B cell (primary cell): ENCODE measurements at regions of chr5 and their contacts with region 1.

Region 1: DNA sequence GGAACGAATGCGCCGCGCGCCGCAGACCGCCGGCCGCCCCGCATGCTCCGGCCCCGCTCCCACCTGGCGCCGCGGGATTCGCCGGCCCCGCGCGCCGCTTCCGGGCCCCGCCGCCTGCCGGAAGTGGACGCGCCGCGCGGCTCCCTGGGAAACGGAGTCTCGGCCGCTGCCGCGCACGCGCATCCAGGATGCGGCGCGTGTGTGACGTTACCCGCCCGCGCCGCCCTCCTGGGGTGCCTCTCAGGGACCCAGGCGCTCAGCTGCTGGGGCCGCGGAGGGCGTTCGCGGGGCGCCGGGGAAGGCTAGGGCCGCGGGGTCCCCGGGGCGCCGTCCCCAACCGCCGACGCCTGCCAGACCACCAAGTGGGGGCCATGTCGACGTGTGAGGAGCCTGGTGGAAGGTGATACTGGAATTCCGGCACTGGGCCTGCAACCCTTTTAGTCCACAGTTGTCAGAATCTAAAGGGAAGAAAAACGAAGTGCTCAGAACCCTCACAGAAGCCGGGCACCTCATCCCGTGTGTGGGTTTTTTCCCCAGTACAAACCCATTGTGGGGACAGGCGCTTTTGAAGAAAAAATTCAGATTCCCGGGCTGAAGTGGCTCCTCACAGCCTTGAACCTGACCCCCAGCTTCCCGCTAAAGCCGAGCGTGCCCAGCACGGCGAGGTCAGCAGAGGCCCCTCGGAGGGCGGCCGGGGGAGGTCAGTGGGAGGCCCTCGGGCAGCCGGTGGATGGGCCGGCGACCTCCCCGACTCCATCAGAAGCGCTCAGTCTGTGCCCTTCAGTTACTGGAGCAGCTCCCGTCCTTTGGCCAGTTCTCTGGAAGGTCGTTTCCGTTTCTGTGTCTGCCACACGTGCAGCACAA is at the start of gene CLPTM1L:
- DNase-seq: peak; percentile 94
- ATAC-seq: peak; percentile 95
- H3K4me3 ChIP-seq: peak within 1 kb of the TSS; percentile 56 to 92 (median 81)
- H3K4me3 Mint-ChIP-seq: peak within 1 kb of the TSS; percentile 91
- H3K27ac ChIP-seq: peak within 1 kb of the TSS; percentile 73 to 78
- H3K27ac Mint-ChIP-seq: peak within 1 kb of the TSS; percentile 91
- H3K4me1 ChIP-seq: peaks cover 19 to 36% of the 10 kb centered on the region in 2 donors
- H3K4me1 Mint-ChIP-seq: peaks cover 29% of the 10 kb centered on the region
- H3K27me3 ChIP-seq: no peaks in the 10 kb centered on the region
- H3K27me3 Mint-ChIP-seq: no peaks in the 10 kb centered on the region
- CTCF ChIP-seq: no peak
- total RNA-seq, gene CLPTM1L: 99.9 and 104 TPM in 2 replicates

Region 2: DNA sequence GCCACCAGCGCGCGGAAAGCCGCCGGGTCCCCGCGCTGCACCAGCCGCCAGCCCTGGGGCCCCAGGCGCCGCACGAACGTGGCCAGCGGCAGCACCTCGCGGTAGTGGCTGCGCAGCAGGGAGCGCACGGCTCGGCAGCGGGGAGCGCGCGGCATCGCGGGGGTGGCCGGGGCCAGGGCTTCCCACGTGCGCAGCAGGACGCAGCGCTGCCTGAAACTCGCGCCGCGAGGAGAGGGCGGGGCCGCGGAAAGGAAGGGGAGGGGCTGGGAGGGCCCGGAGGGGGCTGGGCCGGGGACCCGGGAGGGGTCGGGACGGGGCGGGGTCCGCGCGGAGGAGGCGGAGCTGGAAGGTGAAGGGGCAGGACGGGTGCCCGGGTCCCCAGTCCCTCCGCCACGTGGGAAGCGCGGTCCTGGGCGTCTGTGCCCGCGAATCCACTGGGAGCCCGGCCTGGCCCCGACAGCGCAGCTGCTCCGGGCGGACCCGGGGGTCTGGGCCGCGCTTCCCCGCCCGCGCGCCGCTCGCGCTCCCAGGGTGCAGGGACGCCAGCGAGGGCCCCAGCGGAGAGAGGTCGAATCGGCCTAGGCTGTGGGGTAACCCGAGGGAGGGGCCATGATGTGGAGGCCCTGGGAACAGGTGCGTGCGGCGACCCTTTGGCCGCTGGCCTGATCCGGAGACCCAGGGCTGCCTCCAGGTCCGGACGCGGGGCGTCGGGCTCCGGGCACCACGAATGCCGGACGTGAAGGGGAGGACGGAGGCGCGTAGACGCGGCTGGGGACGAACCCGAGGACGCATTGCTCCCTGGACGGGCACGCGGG is 50.2 kb before region 1 on chr5 and contains the start of gene TERT:
- CTCF ChIA-PET with region 1: no interaction called
- POLR2A ChIA-PET with region 1: no interaction called
- intact Hi-C with region 1: loop called (anchors 2 kb)
- DNase-seq: peak; percentile 66
- ATAC-seq: peak; percentile 82
- H3K4me3 ChIP-seq: peak within 1 kb of the TSS in 3 of 5 experiments; percentile 31 to 35 (median 33)
- H3K4me3 Mint-ChIP-seq: peak within 1 kb of the TSS; percentile 69
- H3K27ac ChIP-seq: no peak within 1 kb of the TSS
- H3K27ac Mint-ChIP-seq: no peak within 1 kb of the TSS
- H3K4me1 ChIP-seq: peaks cover 11% of the 10 kb centered on the region in 2 donors
- H3K4me1 Mint-ChIP-seq: peaks cover 15% of the 10 kb centered on the region
- H3K27me3 ChIP-seq: peaks cover 0 to 10% (median 0%) of the 10 kb centered on the region in 4 experiments
- H3K27me3 Mint-ChIP-seq: peaks cover 3% of the 10 kb centered on the region
- CTCF ChIP-seq: no peak
- total RNA-seq, gene TERT: 0.10 and 0.39 TPM in 2 replicates

Region 3: GRCh38 chr5:1366514-1366913 is 21.3 kb after region 1 on chr5:
- CTCF ChIA-PET with region 1: interaction called, 3 read pairs
- POLR2A ChIA-PET with region 1: interaction called, 5 read pairs
- intact Hi-C with region 1: loop called (anchors 1 kb)
- DNase-seq: peak; percentile 77
- ATAC-seq: peak; percentile 85
- H3K4me3 ChIP-seq: peak overlapping the region in 1 of 5 experiments; percentile 22
- H3K4me3 Mint-ChIP-seq: peak overlapping the region; percentile 75
- H3K27ac ChIP-seq: no peak overlapping the region
- H3K27ac Mint-ChIP-seq: peak overlapping the region; percentile 80
- H3K4me1 ChIP-seq: peaks cover 35 to 41% of the 10 kb centered on the region in 2 donors
- H3K4me1 Mint-ChIP-seq: peaks cover 42% of the 10 kb centered on the region
- H3K27me3 ChIP-seq: peaks cover 0 to 16% (median 5%) of the 10 kb centered on the region in 4 experiments
- H3K27me3 Mint-ChIP-seq: peaks cover 11% of the 10 kb centered on the region
- CTCF ChIP-seq: no peak

Region 4: DNA sequence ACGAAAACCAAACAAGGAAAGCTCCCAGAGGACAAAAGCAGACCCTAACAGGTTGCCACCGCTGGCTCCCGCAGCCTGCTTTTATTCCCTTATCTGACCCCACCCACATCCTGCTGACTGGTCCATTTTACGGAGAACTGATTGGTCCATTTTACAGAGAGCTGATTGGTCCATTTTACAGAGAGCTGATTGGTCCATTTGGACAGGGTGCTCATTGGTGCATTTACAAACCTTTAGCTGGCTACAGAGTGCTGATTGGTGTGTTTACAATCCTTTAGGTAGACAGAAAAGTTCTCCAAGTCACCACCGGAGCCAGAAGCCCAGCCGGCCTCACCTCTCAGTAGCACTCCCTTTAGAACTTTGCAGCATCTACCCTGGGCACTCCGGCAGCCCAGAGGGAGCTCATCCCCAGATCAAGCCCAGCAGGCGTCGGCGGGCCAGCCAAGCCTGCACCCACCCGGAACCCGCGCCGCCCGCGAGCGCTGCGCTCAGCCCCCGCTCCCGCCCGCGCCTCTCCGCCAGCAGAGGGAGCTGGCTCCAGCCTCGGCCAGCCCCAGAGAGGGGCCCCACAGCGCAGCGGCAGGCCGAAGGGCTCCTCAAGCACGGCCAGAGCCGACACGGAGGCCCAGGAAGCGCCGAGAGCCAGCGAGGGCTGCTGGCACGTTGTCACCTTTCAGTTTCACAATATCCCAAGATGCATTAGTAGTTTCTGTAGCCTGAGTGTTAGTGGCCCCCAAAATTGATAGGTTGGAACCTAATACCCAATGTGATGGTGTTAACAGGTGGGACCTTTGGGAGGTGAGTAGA is 35.0 kb after region 1 on chr5:
- CTCF ChIA-PET with region 1: interaction called, 26 read pairs
- POLR2A ChIA-PET with region 1: interaction called, 26 read pairs
- intact Hi-C with region 1: no loop called
- DNase-seq: peak; percentile 83
- ATAC-seq: peak; percentile 93
- H3K4me3 ChIP-seq: peak overlapping the region in 4 of 5 experiments; percentile 21 to 56 (median 39)
- H3K4me3 Mint-ChIP-seq: peak overlapping the region; percentile 85
- H3K27ac ChIP-seq: no peak overlapping the region
- H3K27ac Mint-ChIP-seq: peak overlapping the region; percentile 74
- H3K4me1 ChIP-seq: peaks cover 5 to 12% of the 10 kb centered on the region in 2 donors
- H3K4me1 Mint-ChIP-seq: peaks cover 22% of the 10 kb centered on the region
- H3K27me3 ChIP-seq: no peaks in the 10 kb centered on the region
- H3K27me3 Mint-ChIP-seq: no peaks in the 10 kb centered on the region
- CTCF ChIP-seq: peak; percentile 96

Region 5: DNA sequence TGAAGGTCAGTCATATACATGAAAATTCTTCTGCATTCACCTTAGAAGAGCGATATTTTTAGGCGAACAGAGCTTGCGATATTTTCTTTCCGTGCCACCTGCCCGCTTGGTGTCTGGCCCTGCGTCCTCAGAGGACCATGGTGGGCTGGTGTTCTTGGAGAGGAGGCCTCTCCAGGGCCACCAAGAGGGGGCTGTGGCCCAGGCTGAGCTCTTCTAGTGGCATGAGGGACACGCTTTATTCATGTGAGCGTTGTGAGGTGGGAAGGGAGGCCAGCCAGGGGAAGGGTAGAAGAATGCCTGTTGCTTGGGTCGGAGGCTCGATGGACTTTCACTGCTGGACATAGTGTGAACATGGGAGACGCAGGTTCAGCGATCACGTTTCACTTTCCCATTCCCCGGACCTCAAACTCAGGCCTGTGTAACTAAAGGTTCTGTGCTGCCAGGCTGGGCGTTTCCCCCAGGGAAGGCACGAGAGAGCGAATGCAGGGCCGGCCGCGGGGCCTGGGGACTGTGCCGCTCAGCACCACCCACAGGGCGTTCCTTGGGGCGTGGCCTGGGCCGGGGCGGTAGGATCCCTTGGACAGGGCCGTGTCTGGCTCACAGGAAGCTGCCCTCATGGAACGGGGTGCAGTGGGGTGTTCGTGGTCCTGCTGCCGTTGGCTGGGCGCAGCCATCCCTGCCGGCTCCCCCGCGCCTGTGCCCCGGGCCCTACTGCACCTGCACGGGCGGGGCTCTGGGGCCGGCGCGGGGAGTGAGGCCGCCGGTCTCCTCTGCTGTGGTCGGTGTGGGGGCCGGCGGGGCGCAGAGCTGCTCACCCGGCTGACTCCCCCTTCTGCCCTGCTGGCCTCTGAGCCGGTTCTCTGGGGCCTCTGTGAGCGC is 40.4 kb after region 1 on chr5:
- CTCF ChIA-PET with region 1: interaction called, 26 read pairs
- POLR2A ChIA-PET with region 1: interaction called, 26 read pairs
- intact Hi-C with region 1: loop called (anchors 1 kb)
- DNase-seq: peak; percentile 88
- ATAC-seq: peak; percentile 91
- H3K4me3 ChIP-seq: peak overlapping the region; percentile 22 to 78 (median 62)
- H3K4me3 Mint-ChIP-seq: peak overlapping the region; percentile 96
- H3K27ac ChIP-seq: peak overlapping the region; percentile 83 to 92
- H3K27ac Mint-ChIP-seq: peak overlapping the region; percentile 100
- H3K4me1 ChIP-seq: peaks cover 15 to 21% of the 10 kb centered on the region in 2 donors
- H3K4me1 Mint-ChIP-seq: peaks cover 30% of the 10 kb centered on the region
- H3K27me3 ChIP-seq: peaks cover 0 to 3% (median 0%) of the 10 kb centered on the region in 4 experiments
- H3K27me3 Mint-ChIP-seq: peaks cover 13% of the 10 kb centered on the region
- CTCF ChIP-seq: no peak

Region 6: GRCh38 chr5:1523771-1524480 is 178.7 kb after region 1 on chr5 and contains the start of gene LPCAT1:
- CTCF ChIA-PET with region 1: no interaction called
- POLR2A ChIA-PET with region 1: no interaction called
- intact Hi-C with region 1: loop called (anchors 1 kb)
- DNase-seq: peak; percentile 88
- ATAC-seq: peak; percentile 85
- H3K4me3 ChIP-seq: peak within 1 kb of the TSS; percentile 32 to 74 (median 64)
- H3K4me3 Mint-ChIP-seq: peak within 1 kb of the TSS; percentile 88
- H3K27ac ChIP-seq: peak within 1 kb of the TSS; percentile 76 to 90
- H3K27ac Mint-ChIP-seq: peak within 1 kb of the TSS; percentile 91
- H3K4me1 ChIP-seq: peaks cover 39 to 53% of the 10 kb centered on the region in 2 donors
- H3K4me1 Mint-ChIP-seq: peaks cover 53% of the 10 kb centered on the region
- H3K27me3 ChIP-seq: no peaks in the 10 kb centered on the region
- H3K27me3 Mint-ChIP-seq: no peaks in the 10 kb centered on the region
- CTCF ChIP-seq: no peak
- total RNA-seq, gene LPCAT1: 152 and 159 TPM in 2 replicates